ENCODE measurements at regions of chr11 and their contacts with region 1.

Region 1: GRCh38 chr11:110195845-110196754 is 100.3 kb downstream of the RDX start:
- DNase-seq: no peak
- CTCF ChIP-seq: no peak

Region 2: GRCh38 chr11:110185121-110185591 is 10.9 kb before region 1 on chr11:
- CTCF ChIA-PET with region 1: interaction called, 27 read pairs
- POLR2A ChIA-PET with region 1: no interaction called
- DNase-seq: no peak
- CTCF ChIP-seq: no peak

Region 3: GRCh38 chr11:110217223-110217877 is 21.2 kb after region 1 on chr11:
- CTCF ChIA-PET with region 1: interaction called, 16 read pairs
- POLR2A ChIA-PET with region 1: no interaction called
- DNase-seq: no peak
- CTCF ChIP-seq: no peak

Region 4: GRCh38 chr11:110268441-110268840 is 72.3 kb after region 1 on chr11:
- CTCF ChIA-PET with region 1: no interaction called
- POLR2A ChIA-PET with region 1: no interaction called
- DNase-seq: no peak
- CTCF ChIP-seq: no peak

Region 5: GRCh38 chr11:110279881-110280280 is 83.8 kb after region 1 on chr11:
- CTCF ChIA-PET with region 1: no interaction called
- POLR2A ChIA-PET with region 1: no interaction called
- DNase-seq: no peak
- CTCF ChIP-seq: no peak

Region 6: DNA sequence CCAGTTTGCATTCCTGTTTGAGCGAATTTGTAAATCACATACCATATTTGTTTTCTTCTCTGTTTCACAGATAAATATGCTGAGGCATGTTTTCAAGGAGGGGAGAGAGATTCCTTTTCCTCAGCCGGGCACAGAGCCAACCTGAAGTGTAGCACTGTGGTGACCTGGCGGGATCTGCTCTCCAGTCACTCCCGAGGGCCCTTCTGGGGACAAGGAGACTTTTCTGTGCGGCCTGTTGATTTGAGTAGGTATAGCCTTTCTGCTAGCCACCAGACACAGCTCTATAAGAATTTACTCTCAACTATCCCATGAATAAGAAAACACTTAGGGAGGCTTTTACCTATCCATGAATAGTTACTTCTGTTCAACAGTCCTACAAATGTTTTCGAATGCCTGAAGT is 170.2 kb after region 1 on chr11:
- CTCF ChIA-PET with region 1: interaction called, 20 read pairs
- POLR2A ChIA-PET with region 1: no interaction called
- DNase-seq: no peak
- CTCF ChIP-seq: no peak

Region 7: DNA sequence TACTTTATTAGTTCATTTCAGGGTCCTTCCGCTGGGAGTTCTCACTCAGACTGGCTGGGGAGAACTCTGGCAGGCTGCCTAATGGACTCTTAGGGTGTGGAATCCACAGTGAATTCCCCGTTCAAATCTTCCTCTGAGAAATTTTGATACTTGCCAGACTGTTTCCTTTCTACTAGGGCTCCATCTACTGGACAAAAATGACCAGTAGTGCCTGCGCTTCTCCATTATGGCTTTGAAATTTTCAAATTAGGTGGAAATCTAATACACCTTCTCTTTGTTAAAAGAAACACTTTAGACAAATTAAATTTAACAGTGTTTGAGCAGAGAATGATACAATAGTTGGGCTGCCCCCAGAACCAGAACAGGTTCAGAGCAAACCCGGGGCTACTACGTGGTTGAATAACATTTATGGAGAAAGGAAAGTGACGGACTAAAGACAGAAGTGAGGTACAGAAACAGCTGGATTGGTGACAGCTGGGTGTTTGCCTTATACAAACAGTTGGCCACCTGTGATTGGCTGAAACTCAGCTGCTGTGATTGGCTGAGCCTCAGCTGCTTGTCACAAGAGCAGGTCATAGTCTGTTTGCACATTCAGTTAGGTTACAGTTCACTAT is 180.7 kb after region 1 on chr11:
- CTCF ChIA-PET with region 1: interaction called, 38 read pairs
- POLR2A ChIA-PET with region 1: no interaction called
- DNase-seq: peak; percentile 38
- CTCF ChIP-seq: peak; percentile 70

Region 8: DNA sequence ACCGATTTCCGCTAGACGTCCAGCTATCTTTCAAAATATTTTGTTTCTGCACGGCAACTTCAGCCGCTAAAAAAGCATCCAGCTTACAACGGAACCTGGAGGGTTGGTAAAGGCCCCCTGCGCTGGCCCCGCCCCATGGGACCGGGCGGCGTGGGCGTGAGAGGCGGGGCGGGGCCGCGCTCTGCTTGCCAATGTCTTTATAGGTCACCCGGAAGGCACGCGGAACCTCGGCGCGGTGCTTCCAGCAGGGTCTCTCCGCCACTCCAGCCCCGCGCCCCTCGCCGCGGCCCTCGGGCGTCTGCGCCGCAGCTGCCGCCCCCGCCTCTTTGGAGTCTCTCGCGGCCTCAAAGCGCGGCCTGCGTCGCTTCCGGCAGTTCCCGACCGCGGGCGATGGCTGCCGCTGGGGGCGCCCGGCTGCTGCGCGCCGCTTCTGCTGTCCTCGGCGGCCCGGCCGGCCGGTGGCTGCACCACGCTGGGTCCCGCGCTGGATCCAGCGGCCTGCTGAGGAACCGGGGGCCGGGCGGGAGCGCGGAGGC is 233.7 kb after region 1 on chr11 and contains the start of gene FDX1:
- CTCF ChIA-PET with region 1: interaction called, 115 read pairs
- POLR2A ChIA-PET with region 1: no interaction called
- DNase-seq: peak; percentile 83
- CTCF ChIP-seq: peak; percentile 73